Vagina (tissue), 2 donors: ENCODE measurements at regions of chr12 and their contacts with region 1.

Region 1: DNA sequence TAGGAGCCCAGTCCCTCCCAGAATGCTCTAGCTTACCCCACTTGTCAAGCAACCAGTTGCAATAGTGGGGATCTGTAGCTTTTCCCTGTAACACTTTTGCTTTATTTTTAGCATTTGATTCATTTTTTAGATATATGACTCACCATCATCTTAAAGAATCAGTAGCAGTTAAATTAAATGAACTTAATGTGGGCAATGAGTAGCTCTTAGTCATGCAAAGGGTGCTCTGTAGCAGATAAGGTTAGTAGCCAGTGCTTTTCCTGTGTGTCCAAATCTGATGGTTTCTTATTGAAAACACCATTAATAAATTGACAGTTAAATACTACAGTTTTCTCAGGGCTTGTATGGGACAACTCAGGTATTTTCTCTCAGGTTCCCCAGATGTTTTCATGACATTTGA is 311.8 kb downstream of the RERGL start:
- DNase-seq: no peak
- H3K4me3 ChIP-seq: no peak overlapping the region
- H3K27ac ChIP-seq: no peak overlapping the region
- H3K4me1 ChIP-seq: no peaks in the 10 kb centered on the region
- H3K27me3 ChIP-seq: no peaks in the 10 kb centered on the region
- CTCF ChIP-seq: no peak
- POLR2A ChIP-seq: no peak

Region 2: GRCh38 chr12:17802657-17803641 is 24.7 kb after region 1 on chr12:
- intact Hi-C with region 1: no loop called
- DNase-seq: no peak
- H3K4me3 ChIP-seq: no peak overlapping the region
- H3K27ac ChIP-seq: no peak overlapping the region
- H3K4me1 ChIP-seq: no peaks in the 10 kb centered on the region
- H3K27me3 ChIP-seq: no peaks in the 10 kb centered on the region
- CTCF ChIP-seq: no peak
- POLR2A ChIP-seq: no peak

Region 3: DNA sequence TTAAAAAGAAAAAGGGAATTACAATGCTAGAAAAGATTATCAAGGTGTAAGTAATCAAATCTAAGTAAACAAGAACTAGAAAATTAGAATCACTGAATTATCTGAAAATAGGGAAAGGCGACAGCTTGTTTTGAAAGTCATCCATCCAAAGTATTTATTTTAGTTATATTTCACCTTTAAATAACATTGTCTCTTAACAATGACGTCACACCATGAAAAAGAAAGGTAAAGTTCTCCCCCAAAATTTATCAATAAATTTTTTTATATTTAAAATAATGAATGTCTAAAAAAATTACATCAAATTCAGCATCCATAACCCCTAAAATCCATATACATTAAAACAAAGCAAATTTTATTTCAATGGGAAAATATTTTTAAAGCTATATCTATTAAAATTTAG is 88.6 kb after region 1 on chr12:
- intact Hi-C with region 1: loop called (anchors 5 kb)
- DNase-seq: no peak
- H3K4me3 ChIP-seq: no peak overlapping the region
- H3K27ac ChIP-seq: no peak overlapping the region
- H3K4me1 ChIP-seq: no peaks in the 10 kb centered on the region
- H3K27me3 ChIP-seq: no peaks in the 10 kb centered on the region
- CTCF ChIP-seq: no peak
- POLR2A ChIP-seq: no peak

Region 4: DNA sequence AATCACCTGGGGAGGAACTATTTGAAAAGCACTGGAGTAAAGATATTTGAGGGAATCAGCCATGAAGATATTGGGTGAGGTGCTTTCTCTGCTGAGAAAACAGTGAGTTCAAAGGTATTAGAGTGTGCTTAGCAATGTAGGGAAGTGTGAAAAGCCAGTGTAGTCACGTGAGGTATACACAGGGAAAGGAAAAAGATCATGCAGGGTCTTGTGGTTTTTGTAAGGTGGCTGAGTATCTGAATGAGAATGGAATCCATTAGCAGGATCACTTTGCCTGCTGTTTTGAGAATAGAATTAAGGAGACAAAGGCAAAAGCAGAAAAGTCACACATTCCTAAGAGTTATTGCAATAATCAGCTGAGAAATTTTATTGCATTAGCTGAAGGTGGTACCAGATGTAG is 676.1 kb after region 1 on chr12:
- intact Hi-C with region 1: no loop called
- DNase-seq: no peak
- H3K4me3 ChIP-seq: no peak overlapping the region
- H3K27ac ChIP-seq: no peak overlapping the region
- H3K4me1 ChIP-seq: no peaks in the 10 kb centered on the region
- H3K27me3 ChIP-seq: no peaks in the 10 kb centered on the region
- CTCF ChIP-seq: no peak
- POLR2A ChIP-seq: no peak